Breast epithelium (tissue), 4 donors: ENCODE measurements at regions of chr15 and their contacts with region 1.

Region 1: DNA sequence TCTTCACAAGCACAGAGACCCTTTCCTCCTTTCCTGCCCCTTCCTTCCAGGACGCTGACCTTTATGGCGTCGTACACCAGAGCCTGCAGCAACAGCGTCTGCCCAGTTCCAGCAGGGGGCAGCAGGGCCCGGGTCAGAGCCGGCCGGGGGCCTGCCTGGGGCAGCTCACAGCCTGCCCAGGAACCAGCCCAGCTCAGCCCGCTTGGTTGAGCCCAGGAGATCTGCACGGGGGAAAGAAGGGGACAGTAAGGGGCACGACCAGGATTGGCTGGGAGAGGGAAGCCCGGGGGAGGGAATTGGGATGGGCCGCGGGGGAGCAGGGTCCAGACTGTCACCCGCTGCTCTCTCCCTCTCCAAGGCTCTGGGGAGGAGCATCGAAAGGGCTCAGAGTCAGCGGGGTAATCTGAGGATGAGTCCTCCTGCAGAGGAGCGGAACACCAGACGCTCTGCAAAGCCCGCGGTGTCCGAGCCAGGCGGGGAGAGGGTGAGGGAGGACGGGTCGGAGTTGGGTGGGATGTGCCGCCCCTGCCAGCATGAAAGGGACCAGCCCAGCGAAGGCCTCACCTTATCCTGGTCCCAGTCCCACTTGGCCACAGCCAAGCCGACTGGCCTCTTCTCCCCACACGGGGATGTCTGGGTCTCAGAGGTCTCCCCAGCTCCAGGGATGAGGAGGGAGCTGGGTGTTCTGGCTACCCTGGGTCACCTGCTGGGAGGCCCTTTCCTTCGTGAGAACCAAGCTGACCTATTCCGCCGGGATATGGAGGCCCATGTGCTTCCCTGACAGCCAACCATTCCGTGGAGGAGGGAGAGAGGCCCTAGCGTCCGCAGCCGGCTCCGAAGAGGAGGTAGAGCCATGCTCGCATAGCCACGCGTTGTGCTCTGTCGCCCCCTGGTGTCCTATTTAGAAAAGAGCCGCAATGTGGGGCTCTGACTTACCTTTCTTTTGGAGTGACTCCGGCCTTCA is 7.4 kb upstream of the IGDCC3 start:
- DNase-seq: peak; percentile 79 to 86
- H3K4me3 ChIP-seq: peak overlapping the region; percentile 25 to 59 (median 44)
- H3K27ac ChIP-seq: peak overlapping the region; percentile 8 to 49
- H3K4me1 ChIP-seq: no peaks in the 10 kb centered on the region
- H3K27me3 ChIP-seq: no peaks in the 10 kb centered on the region
- CTCF ChIP-seq: peak; percentile 67 to 92 (median 91)
- POLR2A ChIP-seq: no peak

Region 2: GRCh38 chr15:64381000-64381752 is 1004.0 kb before region 1 on chr15 and contains the start of gene PCLAF:
- intact Hi-C with region 1: no loop called
- DNase-seq: peak; percentile 91 to 92
- H3K4me3 ChIP-seq: peak within 1 kb of the TSS; percentile 45 to 71 (median 62)
- H3K27ac ChIP-seq: no peak within 1 kb of the TSS
- H3K4me1 ChIP-seq: no peaks in the 10 kb centered on the region
- H3K27me3 ChIP-seq: no peaks in the 10 kb centered on the region
- CTCF ChIP-seq: peak in 1 of 3 donors; percentile 15
- POLR2A ChIP-seq: no peak
- total RNA-seq, gene PCLAF: 0.48 to 0.66 (median 0.59) TPM

Region 3: GRCh38 chr15:64836023-64836536 is 549.1 kb before region 1 on chr15:
- intact Hi-C with region 1: loop called (anchors 5 kb)
- DNase-seq: no peak
- H3K4me3 ChIP-seq: peak overlapping the region in 2 of 3 donors; percentile 25 to 60
- H3K27ac ChIP-seq: peak overlapping the region; percentile 33 to 87
- H3K4me1 ChIP-seq: peaks cover 0 to 3% of the 10 kb centered on the region in 2 donors
- H3K27me3 ChIP-seq: no peaks in the 10 kb centered on the region
- CTCF ChIP-seq: no peak
- POLR2A ChIP-seq: no peak

Region 4: GRCh38 chr15:64950888-64951287 is 434.3 kb before region 1 on chr15:
- intact Hi-C with region 1: no loop called
- DNase-seq: no peak
- H3K4me3 ChIP-seq: no peak overlapping the region
- H3K27ac ChIP-seq: no peak overlapping the region
- H3K4me1 ChIP-seq: no peaks in the 10 kb centered on the region
- H3K27me3 ChIP-seq: no peaks in the 10 kb centered on the region
- CTCF ChIP-seq: no peak
- POLR2A ChIP-seq: no peak

Region 5: DNA sequence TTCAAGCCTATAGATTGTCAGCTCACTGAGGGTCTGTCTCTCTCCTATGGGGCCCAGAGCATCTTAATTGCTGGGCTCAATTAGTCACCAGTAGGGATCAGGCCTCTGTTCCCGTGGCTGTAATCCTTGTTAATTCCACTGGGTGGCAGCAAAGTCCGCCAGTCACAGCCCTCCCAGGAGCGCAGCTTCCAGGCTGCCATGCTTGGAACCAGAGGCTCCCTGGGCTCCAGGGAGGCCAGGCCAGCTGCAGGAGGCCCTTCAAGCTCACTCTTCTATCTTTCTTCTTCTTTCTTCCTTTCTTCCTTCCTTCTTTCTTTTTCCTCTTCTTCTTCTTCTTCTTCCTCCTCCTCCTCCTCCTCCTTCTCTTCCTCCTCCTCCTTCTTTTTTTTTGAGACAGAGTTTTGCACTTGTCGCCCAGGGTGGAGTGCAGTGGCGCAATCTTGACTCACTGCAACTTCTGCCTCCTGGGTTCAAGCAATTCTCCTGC is 66.3 kb before region 1 on chr15:
- intact Hi-C with region 1: loop called (anchors 1 kb)
- DNase-seq: peak; percentile 61 to 80
- H3K4me3 ChIP-seq: no peak overlapping the region
- H3K27ac ChIP-seq: no peak overlapping the region
- H3K4me1 ChIP-seq: no peaks in the 10 kb centered on the region
- H3K27me3 ChIP-seq: no peaks in the 10 kb centered on the region
- CTCF ChIP-seq: peak; percentile 83 to 97 (median 96)
- POLR2A ChIP-seq: no peak

Region 6: DNA sequence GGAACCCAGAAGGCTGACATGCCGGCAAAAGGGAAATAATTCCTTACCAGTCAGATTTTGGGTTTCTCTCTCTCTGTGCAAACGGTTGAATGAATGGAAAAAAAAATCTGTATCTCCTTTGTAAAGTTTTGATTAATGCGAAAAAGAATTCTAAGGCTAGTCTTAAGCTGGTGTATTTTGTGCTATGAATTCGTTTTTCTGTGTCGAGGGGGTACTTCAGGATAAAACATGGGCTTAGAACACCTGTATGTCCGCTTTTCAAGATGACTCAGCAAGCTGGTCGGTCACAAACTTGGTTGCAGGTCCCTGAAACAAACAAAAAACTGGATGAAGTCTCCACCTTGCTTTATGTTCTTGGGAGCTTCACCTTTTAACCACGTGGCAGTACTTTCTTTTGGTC is 35.8 kb before region 1 on chr15:
- intact Hi-C with region 1: loop called (anchors 2 kb)
- DNase-seq: no peak
- H3K4me3 ChIP-seq: no peak overlapping the region
- H3K27ac ChIP-seq: no peak overlapping the region
- H3K4me1 ChIP-seq: no peaks in the 10 kb centered on the region
- H3K27me3 ChIP-seq: no peaks in the 10 kb centered on the region
- CTCF ChIP-seq: no peak
- POLR2A ChIP-seq: no peak

Region 7: GRCh38 chr15:65451989-65452388 is 66.8 kb after region 1 on chr15:
- intact Hi-C with region 1: no loop called
- DNase-seq: no peak
- H3K4me3 ChIP-seq: no peak overlapping the region
- H3K27ac ChIP-seq: no peak overlapping the region
- H3K4me1 ChIP-seq: no peaks in the 10 kb centered on the region
- H3K27me3 ChIP-seq: no peaks in the 10 kb centered on the region
- CTCF ChIP-seq: no peak
- POLR2A ChIP-seq: no peak